GM10248 (cell line): ENCODE measurements at regions of chr4 and their contacts with region 1.

Region 1: DNA sequence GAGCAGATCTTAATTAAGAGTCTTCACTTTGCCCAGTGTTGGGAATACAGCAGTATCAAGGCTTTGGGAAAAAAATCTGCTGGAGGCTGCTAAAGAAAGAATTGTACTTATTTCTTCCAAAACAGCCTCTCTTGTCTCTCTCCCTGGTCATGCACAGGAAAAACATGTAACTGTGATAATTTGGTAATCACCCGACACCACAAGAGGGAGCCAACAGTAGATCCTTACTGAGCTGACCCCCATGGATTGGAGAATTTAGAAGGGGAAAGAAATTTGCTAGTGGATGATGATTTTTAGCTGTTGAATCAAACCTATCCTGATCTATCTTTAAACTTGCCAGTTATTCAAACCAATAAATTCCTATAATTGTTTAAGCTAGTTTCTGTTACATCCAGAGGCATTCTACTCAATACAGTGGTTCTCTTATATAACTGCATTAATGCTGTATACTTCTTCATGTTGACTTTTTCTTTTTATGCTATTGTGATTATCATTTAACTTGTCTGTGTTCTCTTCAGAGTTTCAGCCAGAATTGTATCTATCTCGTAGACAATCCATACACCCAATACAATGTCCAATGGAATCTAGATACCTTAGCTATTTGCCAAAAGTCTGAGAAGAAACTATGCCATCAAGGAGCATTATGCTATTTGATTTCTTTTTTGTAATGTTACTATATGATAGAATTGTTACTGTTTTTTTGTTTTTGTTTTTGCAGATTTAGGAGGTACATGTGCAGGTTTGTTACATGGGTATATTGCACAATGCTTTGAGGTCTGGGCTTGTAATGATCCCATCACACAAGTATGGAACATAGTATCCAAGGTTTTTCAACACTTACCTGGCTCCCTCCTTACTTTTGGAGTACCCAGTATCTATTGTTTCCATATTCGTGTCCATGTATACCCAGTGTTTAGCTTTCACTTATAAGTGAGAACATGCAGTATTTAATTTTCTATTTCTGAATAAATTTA is 31.3 kb upstream of the ARHGEF38 start:
- DNase-seq: peak; percentile 62
- CTCF ChIP-seq: peak; percentile 61

Region 2: DNA sequence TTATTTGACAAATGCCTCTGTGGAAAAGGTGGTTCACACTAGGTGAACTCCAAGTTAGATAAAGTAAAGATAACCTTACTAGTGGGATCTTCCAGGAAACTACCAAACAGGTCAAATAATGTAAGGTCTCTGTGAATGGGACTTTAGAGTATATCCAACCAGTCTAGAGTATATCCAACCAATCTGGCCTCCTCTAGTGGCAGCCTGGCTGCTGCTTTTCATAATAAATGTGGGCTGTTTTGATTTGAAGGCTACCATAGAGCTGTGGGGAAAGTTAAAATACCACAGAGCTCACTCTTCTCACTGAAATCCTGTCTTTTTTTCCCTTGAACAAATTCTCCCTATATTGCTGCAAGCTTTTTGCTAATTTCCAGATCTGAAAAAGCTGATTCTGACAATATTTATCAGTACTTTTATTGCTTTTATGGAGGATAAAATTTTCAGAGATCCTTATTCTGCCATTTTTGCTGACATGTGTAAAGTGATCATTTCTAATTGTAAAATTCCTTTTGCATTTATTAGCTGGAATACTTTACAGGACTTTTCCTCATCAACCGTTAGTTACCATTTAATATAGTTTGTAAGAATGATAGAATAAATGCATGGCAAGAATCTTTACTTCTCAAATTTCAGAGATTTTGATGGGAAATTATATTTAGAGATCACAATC is 263.1 kb before region 1 on chr4:
- CTCF ChIA-PET with region 1: no interaction called
- POLR2A ChIA-PET with region 1: no interaction called
- DNase-seq: no peak
- CTCF ChIP-seq: no peak

Region 3: DNA sequence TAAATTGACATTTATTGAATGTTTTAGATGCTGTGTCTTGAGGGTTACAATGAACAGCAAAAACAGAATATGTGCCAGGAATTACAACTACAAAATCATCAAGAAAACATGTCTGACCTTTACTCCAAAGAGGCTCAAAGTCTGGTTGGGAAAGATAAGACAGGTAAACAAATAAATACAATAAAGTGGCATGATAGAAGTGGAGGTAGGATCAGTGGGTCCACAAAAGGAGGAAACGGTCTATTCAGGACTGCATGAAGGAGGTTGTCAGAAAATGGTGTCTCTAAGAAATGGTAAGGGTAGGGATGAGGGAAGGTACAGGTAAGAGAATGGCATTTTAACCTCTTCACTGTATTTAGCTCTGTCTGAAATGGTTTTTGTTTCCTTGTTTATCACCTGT is 35.1 kb after region 1 on chr4:
- CTCF ChIA-PET with region 1: no interaction called
- POLR2A ChIA-PET with region 1: no interaction called
- DNase-seq: no peak
- CTCF ChIP-seq: no peak

Region 4: DNA sequence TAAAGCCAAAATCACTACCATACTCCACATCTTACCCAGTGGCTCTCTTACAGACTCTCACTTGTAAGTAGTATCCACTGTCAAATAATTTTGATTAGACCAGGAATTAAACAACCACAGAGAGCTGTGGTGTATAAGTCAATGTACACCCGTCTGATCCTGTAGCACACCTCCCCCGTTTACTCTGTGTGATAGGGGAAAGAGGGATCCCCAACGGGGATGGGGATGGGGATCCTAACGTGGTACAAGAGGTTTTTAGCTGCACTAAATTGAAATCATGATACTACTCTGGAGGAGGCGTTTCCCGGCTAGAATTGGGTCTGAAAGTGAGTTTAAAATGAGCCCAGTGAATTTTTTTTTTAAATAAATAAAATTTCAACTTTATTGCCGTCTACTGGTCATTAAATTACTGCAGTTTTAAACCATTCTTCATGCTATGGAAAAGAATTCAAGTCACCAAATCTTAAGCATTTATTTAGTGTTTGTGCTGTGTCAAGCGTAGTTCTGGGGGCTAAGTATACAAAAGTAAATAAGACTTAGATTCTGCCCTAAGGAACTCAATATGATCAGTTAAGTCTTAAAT is 110.8 kb after region 1 on chr4:
- CTCF ChIA-PET with region 1: interaction called, 11 read pairs
- POLR2A ChIA-PET with region 1: no interaction called
- DNase-seq: no peak
- CTCF ChIP-seq: no peak

Region 5: DNA sequence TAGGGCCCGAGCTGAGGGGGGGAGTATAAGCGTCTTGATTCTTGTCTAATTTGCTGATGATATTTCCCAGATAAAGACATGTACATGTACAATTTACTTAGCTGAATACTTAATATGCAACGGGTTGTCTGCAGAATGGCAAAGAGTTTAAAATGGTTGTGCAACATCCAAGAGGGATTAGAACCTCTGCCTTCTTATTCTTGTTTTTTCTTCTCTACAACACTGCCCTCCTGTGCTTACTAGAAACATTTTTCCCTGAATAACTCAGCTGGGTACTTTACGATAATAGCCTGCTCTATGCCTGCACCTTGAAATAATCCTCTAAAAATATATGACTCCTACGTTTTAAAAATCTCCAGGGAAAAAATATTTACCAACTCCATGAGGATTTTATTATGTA is 145.6 kb after region 1 on chr4:
- CTCF ChIA-PET with region 1: interaction called, 40 read pairs
- POLR2A ChIA-PET with region 1: no interaction called
- DNase-seq: peak; percentile 28
- CTCF ChIP-seq: peak; percentile 15

Region 6: DNA sequence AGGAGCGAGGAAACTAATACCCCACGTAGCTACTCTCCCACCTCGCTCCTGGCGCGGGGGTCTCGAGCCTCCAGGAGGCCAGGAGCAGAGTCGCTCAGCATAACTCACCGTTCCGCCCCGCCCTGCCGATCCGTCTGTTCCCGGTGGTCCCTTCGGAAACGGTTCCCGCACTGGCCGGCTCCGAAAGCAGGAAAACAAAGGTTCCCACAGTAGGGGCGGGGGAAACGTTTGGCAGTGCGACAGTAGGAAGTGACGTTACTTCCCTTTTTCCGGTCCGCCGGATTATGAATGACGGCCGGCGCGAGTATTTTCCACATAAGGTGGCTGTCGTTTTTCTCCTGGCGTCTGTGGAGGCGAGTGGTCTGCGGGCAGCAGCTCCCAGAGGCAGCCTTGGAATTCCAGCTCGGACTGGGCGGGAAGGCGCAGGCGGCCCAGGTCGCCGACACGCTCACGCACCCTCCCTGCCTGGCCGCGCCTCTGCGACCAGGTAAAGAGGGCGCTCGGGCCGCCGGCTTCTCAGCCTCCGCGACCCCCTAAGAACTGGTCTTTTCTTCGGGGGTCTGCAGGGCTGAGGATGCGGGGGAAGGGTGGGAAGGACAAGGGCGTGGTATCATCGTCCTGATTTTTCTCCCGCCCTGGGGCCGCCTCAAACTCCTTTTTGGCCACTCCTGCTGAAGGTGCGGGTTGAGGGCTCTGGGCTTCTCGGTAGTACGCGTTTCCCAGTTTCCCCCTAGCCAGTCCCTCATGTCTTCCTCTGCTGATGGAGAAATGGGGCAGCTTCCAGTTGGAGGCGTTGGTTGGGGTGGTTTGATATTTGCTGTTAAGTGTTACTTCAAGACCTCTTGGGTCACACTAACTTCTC is 187.7 kb after region 1 on chr4 and contains the starts of genes GSTCD and INTS12:
- CTCF ChIA-PET with region 1: interaction called, 20 read pairs
- POLR2A ChIA-PET with region 1: no interaction called
- DNase-seq: peak; percentile 83
- CTCF ChIP-seq: no peak

Region 7: DNA sequence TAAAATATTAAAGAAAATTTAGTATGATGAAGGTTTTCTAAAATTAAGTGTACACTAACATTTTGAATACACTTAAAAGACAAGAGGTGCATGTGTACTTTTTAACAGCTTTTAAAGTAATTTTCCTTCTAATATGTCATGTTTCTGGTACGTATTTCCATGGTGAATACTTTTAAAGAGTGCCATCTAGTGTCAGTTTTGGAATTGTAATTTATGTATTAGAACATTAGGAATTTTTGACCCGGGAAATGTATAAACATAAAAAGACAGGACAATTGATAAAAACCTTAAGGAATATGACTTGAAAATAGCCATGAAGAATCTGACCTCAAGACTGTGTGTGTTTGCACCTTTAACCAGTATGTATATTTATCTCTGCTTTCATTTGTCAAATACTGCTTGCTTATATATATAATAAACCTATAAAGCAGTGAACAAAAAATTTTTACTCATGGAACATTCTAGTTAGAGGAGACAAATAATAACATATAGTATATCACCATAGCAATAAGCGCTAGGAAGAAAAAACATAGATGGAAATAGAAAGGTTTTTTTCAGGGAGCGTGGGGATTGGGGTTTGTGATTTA is 194.7 kb after region 1 on chr4:
- CTCF ChIA-PET with region 1: interaction called, 20 read pairs
- POLR2A ChIA-PET with region 1: no interaction called
- DNase-seq: no peak
- CTCF ChIP-seq: peak; percentile 41